ENCODE measurements at regions of chr1 and their contacts with region 1.

Region 1: GRCh38 chr1:115807723-115808122 is 33.2 kb downstream of the NHLH2 start:
- H3K4me3 Mint-ChIP-seq: no peak overlapping the region
- H3K27ac Mint-ChIP-seq: no peak overlapping the region
- H3K4me1 Mint-ChIP-seq: peaks cover 12% of the 10 kb centered on the region
- H3K27me3 Mint-ChIP-seq: peaks cover 1% of the 10 kb centered on the region

Region 2: DNA sequence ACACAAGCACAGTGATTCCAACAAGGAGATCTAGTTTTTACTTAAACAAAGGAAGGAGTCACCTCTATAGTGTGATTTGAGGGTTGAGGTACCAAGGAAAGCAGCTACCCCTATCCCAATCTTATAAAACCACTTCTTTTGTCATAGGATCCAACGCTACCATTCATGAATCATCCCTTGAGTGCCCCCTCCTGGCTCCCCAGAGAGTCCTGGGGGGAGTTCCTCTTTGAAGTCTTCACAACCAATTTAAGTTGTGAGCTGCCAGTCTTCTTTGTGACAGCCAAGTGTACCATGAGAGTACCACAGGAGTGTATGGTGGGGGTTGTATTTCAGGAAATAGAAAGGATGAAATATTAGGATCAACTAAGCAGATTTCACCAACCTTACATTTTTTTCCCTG is 72.3 kb after region 1 on chr1:
- intact Hi-C with region 1: loop called (anchors 5 kb)
- H3K4me3 Mint-ChIP-seq: no peak overlapping the region
- H3K27ac Mint-ChIP-seq: no peak overlapping the region
- H3K4me1 Mint-ChIP-seq: no peaks in the 10 kb centered on the region
- H3K27me3 Mint-ChIP-seq: peaks cover 5% of the 10 kb centered on the region

Region 3: GRCh38 chr1:115980998-115981993 is 173.6 kb after region 1 on chr1:
- intact Hi-C with region 1: loop called (anchors 1 kb)
- H3K4me3 Mint-ChIP-seq: no peak overlapping the region
- H3K27ac Mint-ChIP-seq: no peak overlapping the region
- H3K4me1 Mint-ChIP-seq: peaks cover 60% of the 10 kb centered on the region
- H3K27me3 Mint-ChIP-seq: no peaks in the 10 kb centered on the region

Region 4: DNA sequence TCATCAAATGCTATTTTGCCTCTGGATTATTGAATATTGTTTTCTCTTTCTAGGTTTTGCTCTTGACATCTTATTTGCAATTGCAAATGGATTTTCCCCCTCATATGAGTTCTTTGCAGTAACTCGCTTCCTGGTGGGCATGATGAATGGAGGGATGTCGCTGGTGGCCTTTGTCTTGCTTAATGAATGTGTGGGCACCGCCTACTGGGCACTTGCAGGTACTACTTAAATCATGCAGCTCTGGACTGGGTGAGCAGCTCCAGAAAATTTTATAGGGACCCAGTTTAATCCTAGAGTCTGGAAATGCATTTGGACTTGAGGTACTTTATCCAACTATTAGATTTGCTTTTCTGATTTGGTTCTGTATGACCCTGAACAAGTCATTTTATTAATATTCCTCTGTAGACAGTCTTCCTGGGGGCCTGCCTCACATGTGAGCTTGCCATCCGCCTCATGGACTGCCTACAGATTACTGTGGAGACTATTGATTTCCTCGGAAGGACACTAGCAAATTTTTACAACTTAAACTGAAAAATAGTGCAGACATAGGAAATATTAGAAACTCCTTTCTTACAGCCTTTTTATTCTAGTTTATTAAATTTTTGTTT is 213.0 kb after region 1 on chr1:
- intact Hi-C with region 1: loop called (anchors 1 kb)
- H3K4me3 Mint-ChIP-seq: no peak overlapping the region
- H3K27ac Mint-ChIP-seq: no peak overlapping the region
- H3K4me1 Mint-ChIP-seq: peaks cover 21% of the 10 kb centered on the region
- H3K27me3 Mint-ChIP-seq: no peaks in the 10 kb centered on the region

Measured in dendritic cell treated with granulocyte-macrophage colony-stimulating factor and Interleukin-4, amounts not matched to agents 40 ng/mL and 50 ng/mL, for 4 days (primary cell).